ENCODE measurements at regions of chr1 and their contacts with region 1.

Region 1: GRCh38 chr1:88180449-88181108 is 503.5 kb upstream of the PKN2 start:
- DNase-seq: peak; percentile 80
- H3K4me3 ChIP-seq: no peak overlapping the region
- H3K4me3 Mint-ChIP-seq: no peak overlapping the region
- H3K27ac Mint-ChIP-seq: no peak overlapping the region
- H3K4me1 ChIP-seq: peaks cover 29% of the 10 kb centered on the region
- H3K4me1 Mint-ChIP-seq: peaks cover 26% of the 10 kb centered on the region
- H3K27me3 ChIP-seq: no peaks in the 10 kb centered on the region
- H3K27me3 Mint-ChIP-seq: no peaks in the 10 kb centered on the region
- CTCF ChIP-seq: peak; percentile 81 to 85

Region 2: DNA sequence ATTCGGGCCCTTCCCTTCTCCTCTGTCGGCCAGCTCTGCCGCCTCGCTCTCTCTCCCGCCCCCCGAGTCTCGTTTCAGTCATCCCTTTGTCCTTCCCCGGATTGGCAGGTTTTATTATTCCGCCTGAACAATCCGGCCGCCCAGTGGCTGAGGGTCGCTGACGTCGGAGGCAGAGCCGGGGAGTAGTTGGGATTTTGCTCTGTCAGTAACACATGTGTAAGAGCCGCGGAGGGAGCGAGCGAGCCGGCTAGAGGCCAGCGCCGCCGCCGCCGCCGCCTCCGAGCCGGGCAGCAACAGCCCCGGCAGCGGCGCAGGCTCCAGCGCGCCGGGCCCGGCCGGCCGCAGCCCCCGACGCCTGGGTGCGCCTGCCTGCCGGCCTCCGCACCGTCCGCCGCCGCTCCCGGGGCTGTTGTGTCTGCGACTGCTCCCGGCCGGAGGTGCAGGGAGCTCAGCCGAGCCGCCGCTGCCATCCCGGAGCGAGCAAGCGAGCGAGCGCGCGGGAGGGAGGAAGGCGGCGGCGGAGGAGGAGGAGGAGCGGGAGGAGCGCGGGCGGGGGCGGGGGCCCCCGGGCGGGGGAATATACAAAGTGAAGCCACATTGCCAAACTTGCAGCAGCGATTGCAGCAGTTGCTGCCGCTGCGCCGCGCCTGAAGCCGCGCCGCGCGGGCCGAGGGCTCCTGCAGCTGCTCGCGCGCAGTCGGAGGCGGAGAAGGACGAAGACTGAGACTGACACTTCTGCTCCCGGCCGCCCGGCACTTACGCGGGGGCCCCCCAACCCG is 852.1 kb before region 1 on chr1 and contains the start of gene LMO4:
- CTCF ChIA-PET with region 1: no interaction called
- POLR2A ChIA-PET with region 1: no interaction called
- intact Hi-C with region 1: loop called (anchors 10 kb)
- DNase-seq: peak; percentile 92 to 95
- H3K4me3 ChIP-seq: peak within 1 kb of the TSS; percentile 62
- H3K4me3 Mint-ChIP-seq: peak within 1 kb of the TSS; percentile 94
- H3K27ac Mint-ChIP-seq: peak within 1 kb of the TSS; percentile 87
- H3K4me1 ChIP-seq: 0 out of 2 replicates have a peak, but pooled peaks cover 4% of the 10 kb centered on the region
- H3K4me1 Mint-ChIP-seq: no peaks in the 10 kb centered on the region
- H3K27me3 ChIP-seq: no peaks in the 10 kb centered on the region
- H3K27me3 Mint-ChIP-seq: no peaks in the 10 kb centered on the region
- CTCF ChIP-seq: no peak
- total RNA-seq, gene LMO4: 50.4 and 53.8 TPM in 2 replicates

Region 3: DNA sequence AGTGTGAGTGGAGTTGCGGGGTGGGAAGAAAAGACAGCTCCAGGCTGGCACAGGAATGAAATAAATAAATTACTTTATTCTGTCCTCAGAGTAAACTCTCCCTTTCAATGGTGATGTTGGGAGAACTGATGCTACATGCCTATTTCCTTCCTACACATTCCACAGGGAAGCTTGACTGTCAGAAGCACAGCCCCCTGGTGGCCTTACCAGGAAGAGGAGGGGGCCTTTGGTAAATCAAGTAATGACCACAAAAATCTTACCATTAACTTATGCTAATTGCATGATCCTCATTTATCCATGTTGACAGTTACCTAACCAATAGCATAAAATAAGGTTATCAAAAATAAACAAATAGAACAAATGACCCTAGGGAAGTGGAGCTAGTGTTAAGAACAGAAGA is 101.5 kb before region 1 on chr1:
- CTCF ChIA-PET with region 1: no interaction called
- POLR2A ChIA-PET with region 1: no interaction called
- intact Hi-C with region 1: loop called (anchors 10 kb)
- DNase-seq: peak; percentile 20 to 42
- H3K4me3 ChIP-seq: no peak overlapping the region
- H3K4me3 Mint-ChIP-seq: no peak overlapping the region
- H3K27ac Mint-ChIP-seq: no peak overlapping the region
- H3K4me1 ChIP-seq: no peaks in the 10 kb centered on the region
- H3K4me1 Mint-ChIP-seq: peaks cover 8% of the 10 kb centered on the region
- H3K27me3 ChIP-seq: no peaks in the 10 kb centered on the region
- H3K27me3 Mint-ChIP-seq: no peaks in the 10 kb centered on the region
- CTCF ChIP-seq: peak; percentile 26 to 62

Region 4: GRCh38 chr1:88224906-88225305 is 44.3 kb after region 1 on chr1:
- CTCF ChIA-PET with region 1: interaction called, 7 read pairs
- POLR2A ChIA-PET with region 1: no interaction called
- intact Hi-C with region 1: loop called (anchors 1 kb)
- DNase-seq: no peak
- H3K4me3 ChIP-seq: no peak overlapping the region
- H3K4me3 Mint-ChIP-seq: no peak overlapping the region
- H3K27ac Mint-ChIP-seq: no peak overlapping the region
- H3K4me1 ChIP-seq: no peaks in the 10 kb centered on the region
- H3K4me1 Mint-ChIP-seq: peaks cover 7% of the 10 kb centered on the region
- H3K27me3 ChIP-seq: no peaks in the 10 kb centered on the region
- H3K27me3 Mint-ChIP-seq: no peaks in the 10 kb centered on the region
- CTCF ChIP-seq: no peak

Region 5: GRCh38 chr1:88239205-88239604 is 58.6 kb after region 1 on chr1:
- CTCF ChIA-PET with region 1: interaction called, 8 read pairs
- POLR2A ChIA-PET with region 1: no interaction called
- intact Hi-C with region 1: loop called (anchors 1 kb)
- DNase-seq: no peak
- H3K4me3 ChIP-seq: no peak overlapping the region
- H3K4me3 Mint-ChIP-seq: no peak overlapping the region
- H3K27ac Mint-ChIP-seq: no peak overlapping the region
- H3K4me1 ChIP-seq: no peaks in the 10 kb centered on the region
- H3K4me1 Mint-ChIP-seq: no peaks in the 10 kb centered on the region
- H3K27me3 ChIP-seq: no peaks in the 10 kb centered on the region
- H3K27me3 Mint-ChIP-seq: no peaks in the 10 kb centered on the region
- CTCF ChIP-seq: no peak

Region 6: GRCh38 chr1:88302843-88303486 is 122.4 kb after region 1 on chr1:
- CTCF ChIA-PET with region 1: no interaction called
- POLR2A ChIA-PET with region 1: no interaction called
- intact Hi-C with region 1: loop called (anchors 1 kb)
- DNase-seq: peak in 1 of 2 experiments; percentile 12
- H3K4me3 ChIP-seq: no peak overlapping the region
- H3K4me3 Mint-ChIP-seq: no peak overlapping the region
- H3K27ac Mint-ChIP-seq: no peak overlapping the region
- H3K4me1 ChIP-seq: no peaks in the 10 kb centered on the region
- H3K4me1 Mint-ChIP-seq: no peaks in the 10 kb centered on the region
- H3K27me3 ChIP-seq: no peaks in the 10 kb centered on the region
- H3K27me3 Mint-ChIP-seq: peaks cover 3% of the 10 kb centered on the region
- CTCF ChIP-seq: peak; percentile 35 to 46

Region 7: GRCh38 chr1:88595355-88596002 is 414.9 kb after region 1 on chr1:
- CTCF ChIA-PET with region 1: no interaction called
- POLR2A ChIA-PET with region 1: no interaction called
- intact Hi-C with region 1: loop called (anchors 10 kb)
- DNase-seq: peak in 1 of 2 experiments; percentile 30
- H3K4me3 ChIP-seq: no peak overlapping the region
- H3K4me3 Mint-ChIP-seq: no peak overlapping the region
- H3K27ac Mint-ChIP-seq: no peak overlapping the region
- H3K4me1 ChIP-seq: no peaks in the 10 kb centered on the region
- H3K4me1 Mint-ChIP-seq: no peaks in the 10 kb centered on the region
- H3K27me3 ChIP-seq: no peaks in the 10 kb centered on the region
- H3K27me3 Mint-ChIP-seq: no peaks in the 10 kb centered on the region
- CTCF ChIP-seq: no peak

Measured in Caco-2 (cell line).